Activated B cell treated with CpG ODN at 0.5 μM for 24 hours (primary cell): ENCODE measurements at regions of chr1 and their contacts with region 1.

Region 1: DNA sequence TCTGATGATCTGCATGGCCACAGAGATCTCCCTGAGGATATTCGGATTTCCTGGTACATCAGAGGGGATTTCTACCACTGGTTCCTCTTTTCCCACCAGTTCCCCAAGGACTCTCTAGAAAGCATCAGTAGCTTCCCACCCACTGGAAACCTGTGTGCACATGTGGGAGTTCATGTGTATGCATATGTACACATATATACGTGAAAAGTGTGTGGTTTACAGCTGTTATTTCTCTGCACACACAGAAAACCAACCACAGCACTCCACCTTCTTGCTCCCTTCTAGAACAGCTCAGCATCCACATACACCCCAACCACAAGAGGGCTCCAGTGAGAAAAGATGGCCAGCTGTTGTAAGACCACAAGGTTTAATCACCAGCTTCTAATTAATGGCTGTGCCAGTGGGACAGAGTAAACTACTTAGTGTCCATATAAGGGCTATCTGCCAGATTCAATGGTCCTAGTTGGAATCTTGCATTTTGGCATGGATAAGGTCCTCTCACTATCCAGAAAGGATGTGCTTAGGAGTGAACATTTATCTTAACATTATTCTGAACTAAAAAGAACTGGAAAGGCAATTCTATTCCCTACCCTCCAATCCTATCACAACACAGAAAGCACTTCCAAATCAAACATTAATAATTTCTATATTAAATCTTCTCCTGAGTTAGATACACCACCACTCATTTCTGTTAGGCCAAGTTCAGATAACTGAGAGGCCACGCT is 24.1 kb downstream of the GPR3 start:
- DNase-seq: no peak
- ATAC-seq: peak; percentile 52
- H3K4me3 Mint-ChIP-seq: peak overlapping the region; percentile 32
- H3K27ac Mint-ChIP-seq: peak overlapping the region; percentile 89
- H3K4me1 Mint-ChIP-seq: peaks cover 55% of the 10 kb centered on the region
- H3K27me3 Mint-ChIP-seq: no peaks in the 10 kb centered on the region
- CTCF ChIP-seq: no peak

Region 2: GRCh38 chr1:27430903-27431600 is 14.5 kb after region 1 on chr1:
- CTCF ChIA-PET with region 1: interaction called, 24 read pairs
- POLR2A ChIA-PET with region 1: interaction called, 6 read pairs
- intact Hi-C with region 1: loop called (anchors 2 kb)
- DNase-seq: no peak
- ATAC-seq: peak; percentile 16
- H3K4me3 Mint-ChIP-seq: peak overlapping the region; percentile 57
- H3K27ac Mint-ChIP-seq: peak overlapping the region; percentile 85
- H3K4me1 Mint-ChIP-seq: peaks cover 95% of the 10 kb centered on the region
- H3K27me3 Mint-ChIP-seq: no peaks in the 10 kb centered on the region
- CTCF ChIP-seq: no peak

Region 3: GRCh38 chr1:27436204-27437159 is 19.9 kb after region 1 on chr1:
- CTCF ChIA-PET with region 1: interaction called, 24 read pairs
- POLR2A ChIA-PET with region 1: interaction called, 10 read pairs
- intact Hi-C with region 1: loop called (anchors 2 kb)
- DNase-seq: no peak
- ATAC-seq: peak; percentile 49
- H3K4me3 Mint-ChIP-seq: peak overlapping the region; percentile 63
- H3K27ac Mint-ChIP-seq: peak overlapping the region; percentile 91
- H3K4me1 Mint-ChIP-seq: peaks cover 87% of the 10 kb centered on the region
- H3K27me3 Mint-ChIP-seq: no peaks in the 10 kb centered on the region
- CTCF ChIP-seq: no peak

Region 4: GRCh38 chr1:27481994-27482620 is 65.6 kb after region 1 on chr1:
- CTCF ChIA-PET with region 1: interaction called, 13 read pairs
- POLR2A ChIA-PET with region 1: interaction called, 5 read pairs
- intact Hi-C with region 1: no loop called
- DNase-seq: no peak
- ATAC-seq: peak; percentile 29
- H3K4me3 Mint-ChIP-seq: peak overlapping the region; percentile 17
- H3K27ac Mint-ChIP-seq: peak overlapping the region; percentile 54
- H3K4me1 Mint-ChIP-seq: peaks cover 82% of the 10 kb centered on the region
- H3K27me3 Mint-ChIP-seq: no peaks in the 10 kb centered on the region
- CTCF ChIP-seq: no peak

Region 5: GRCh38 chr1:27525296-27526272 is 109.0 kb after region 1 on chr1:
- CTCF ChIA-PET with region 1: interaction called, 11 read pairs
- POLR2A ChIA-PET with region 1: interaction called, 3 read pairs
- intact Hi-C with region 1: loop called (anchors 1 kb)
- DNase-seq: peak; percentile 51
- ATAC-seq: peak; percentile 64
- H3K4me3 Mint-ChIP-seq: peak overlapping the region; percentile 41
- H3K27ac Mint-ChIP-seq: peak overlapping the region; percentile 79
- H3K4me1 Mint-ChIP-seq: peaks cover 76% of the 10 kb centered on the region
- H3K27me3 Mint-ChIP-seq: no peaks in the 10 kb centered on the region
- CTCF ChIP-seq: no peak

Region 6: DNA sequence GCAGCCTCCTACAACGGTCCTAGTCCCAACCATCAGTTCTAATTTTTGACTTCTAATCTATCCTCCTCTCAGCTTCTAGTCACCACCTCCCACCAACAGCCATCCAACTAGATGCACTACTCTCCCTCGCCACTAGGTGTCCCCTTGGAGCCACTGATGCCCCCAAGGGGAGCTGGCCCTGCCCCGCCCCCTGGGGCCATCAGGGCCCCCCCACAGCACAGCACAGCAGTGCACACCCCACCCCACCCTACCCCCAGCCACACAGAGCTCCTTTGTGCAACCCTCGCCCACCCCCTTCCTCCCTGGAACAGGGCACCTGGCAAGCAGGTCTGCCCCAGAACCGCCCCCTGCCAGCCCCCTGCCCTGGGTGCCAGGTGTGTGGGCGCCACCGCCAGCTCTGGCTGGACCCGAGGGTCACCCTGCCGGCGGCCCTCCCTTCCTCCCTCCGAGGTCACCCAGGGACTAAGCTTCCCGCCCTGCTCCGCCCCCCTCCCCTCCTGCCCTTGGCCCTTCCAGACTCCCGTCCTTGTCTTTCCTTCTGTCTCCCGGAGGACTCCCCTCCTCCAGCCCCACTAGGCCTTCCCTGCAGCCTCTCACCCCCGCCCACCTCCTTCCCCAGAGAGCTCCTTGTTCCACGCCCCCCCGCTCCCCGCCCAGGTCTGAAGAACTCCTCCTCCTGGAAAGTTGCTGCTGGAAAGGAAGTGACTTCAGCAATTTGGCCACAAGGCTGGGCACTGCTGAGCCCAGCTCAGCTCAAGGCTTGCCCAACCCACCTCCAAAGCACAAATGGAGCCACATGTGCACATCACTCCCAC is 140.4 kb after region 1 on chr1:
- CTCF ChIA-PET with region 1: interaction called, 14 read pairs
- POLR2A ChIA-PET with region 1: interaction called, 6 read pairs
- intact Hi-C with region 1: loop called (anchors 1 kb)
- DNase-seq: peak; percentile 62
- ATAC-seq: peak; percentile 84
- H3K4me3 Mint-ChIP-seq: peak overlapping the region; percentile 36
- H3K27ac Mint-ChIP-seq: peak overlapping the region; percentile 26
- H3K4me1 Mint-ChIP-seq: peaks cover 38% of the 10 kb centered on the region
- H3K27me3 Mint-ChIP-seq: no peaks in the 10 kb centered on the region
- CTCF ChIP-seq: peak; percentile 26

Region 7: GRCh38 chr1:28056129-28056925 is 639.8 kb after region 1 on chr1:
- CTCF ChIA-PET with region 1: no interaction called
- POLR2A ChIA-PET with region 1: interaction called, 15 read pairs
- intact Hi-C with region 1: no loop called
- DNase-seq: no peak
- ATAC-seq: peak; percentile 95
- H3K4me3 Mint-ChIP-seq: peak overlapping the region; percentile 12
- H3K27ac Mint-ChIP-seq: peak overlapping the region; percentile 84
- H3K4me1 Mint-ChIP-seq: peaks cover 32% of the 10 kb centered on the region
- H3K27me3 Mint-ChIP-seq: no peaks in the 10 kb centered on the region
- CTCF ChIP-seq: no peak